ENCODE measurements at regions of chrX and their contacts with region 1.

Region 1: DNA sequence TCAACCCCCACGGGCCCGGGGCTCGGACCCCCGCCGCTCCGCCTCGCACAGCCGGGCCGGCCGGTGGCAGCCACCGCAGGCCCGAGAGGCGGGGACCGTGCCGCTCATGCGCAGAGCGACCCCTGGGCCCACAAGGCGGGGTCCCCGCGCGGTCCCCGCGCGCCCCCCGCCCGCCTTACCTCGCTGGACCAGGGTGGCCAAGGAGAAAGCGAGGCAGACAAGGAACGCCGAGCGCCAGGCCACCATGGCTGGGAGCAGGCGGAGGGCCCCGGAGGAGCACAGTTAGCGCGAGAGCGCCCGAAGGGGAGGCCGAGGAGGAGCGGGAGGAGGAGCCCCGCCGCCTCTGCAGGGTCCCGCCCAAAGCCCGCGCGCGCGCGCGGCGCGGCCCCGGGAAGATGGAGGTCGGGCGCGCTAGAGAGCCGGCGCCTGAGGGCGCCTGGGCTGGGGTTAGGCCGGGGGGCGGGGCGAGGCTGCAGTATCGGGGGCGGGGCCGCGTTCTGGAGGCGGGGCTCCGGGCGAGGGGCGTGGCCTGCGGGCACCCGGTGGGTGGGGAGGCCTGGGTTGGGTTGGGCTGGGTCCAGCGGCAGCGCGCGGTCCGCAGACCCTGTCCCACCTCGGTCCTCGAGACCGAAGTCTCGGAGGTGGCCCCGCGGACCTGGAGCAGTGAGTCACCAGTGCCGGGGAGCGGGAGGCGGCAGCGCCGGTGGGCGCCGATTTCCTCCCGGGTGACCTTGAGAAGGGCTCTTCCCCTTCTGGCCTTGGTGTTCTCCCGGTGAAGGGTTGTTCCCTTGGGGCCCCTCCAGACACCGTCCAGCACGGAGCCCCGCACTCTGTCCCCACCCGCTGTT is at the start of gene CD99L2:
- DNase-seq: peak; percentile 79 to 92 (median 85)
- ATAC-seq: peak; percentile 98
- H3K4me3 ChIP-seq: peak within 1 kb of the TSS; percentile 71
- H3K4me3 Mint-ChIP-seq: peak within 1 kb of the TSS; percentile 76 to 96 (median 90)
- H3K27ac ChIP-seq: peak within 1 kb of the TSS; percentile 89
- H3K27ac Mint-ChIP-seq: peak within 1 kb of the TSS in 8 of 9 donors; percentile 31 to 90 (median 76)
- H3K4me1 ChIP-seq: peaks cover 0 to 4% of the 10 kb centered on the region in 2 donors
- H3K4me1 Mint-ChIP-seq: peaks cover 0 to 16% (median 6%) of the 10 kb centered on the region in 7 donors
- H3K27me3 ChIP-seq: no peaks in the 10 kb centered on the region
- H3K27me3 Mint-ChIP-seq: peaks cover 0 to 26% (median 0%) of the 10 kb centered on the region in 5 donors
- total RNA-seq, gene CD99L2: 14.3 to 20.4 (median 15.6) TPM

Region 2: GRCh38 chrX:150547375-150548115 is 351.0 kb before region 1 on chrX:
- CTCF ChIA-PET with region 1: no interaction called
- POLR2A ChIA-PET with region 1: no interaction called
- intact Hi-C with region 1: loop called in 1 of 2 experiments (anchors 5 kb)
- DNase-seq: peak in 1 of 9 donors; percentile 25
- ATAC-seq: peak; percentile 53
- H3K4me3 ChIP-seq: peak overlapping the region; percentile 43
- H3K4me3 Mint-ChIP-seq: peak overlapping the region; percentile 74 to 91 (median 82)
- H3K27ac ChIP-seq: peak overlapping the region; percentile 14
- H3K27ac Mint-ChIP-seq: peak overlapping the region in 7 of 9 donors; percentile 52 to 96 (median 82)
- H3K4me1 ChIP-seq: peaks cover 11 to 13% of the 10 kb centered on the region in 2 donors
- H3K4me1 Mint-ChIP-seq: peaks cover 10 to 35% (median 24%) of the 10 kb centered on the region in 7 donors
- H3K27me3 ChIP-seq: no peaks in the 10 kb centered on the region
- H3K27me3 Mint-ChIP-seq: no peaks in the 10 kb centered on the region

Region 3: GRCh38 chrX:150693775-150694574 is 204.6 kb before region 1 on chrX:
- CTCF ChIA-PET with region 1: interaction called, 4 read pairs
- POLR2A ChIA-PET with region 1: interaction called, 3 read pairs
- intact Hi-C with region 1: loop called (anchors 2 to 5 kb)
- DNase-seq: peak; percentile 12 to 65 (median 51)
- ATAC-seq: peak; percentile 62
- H3K4me3 ChIP-seq: peak overlapping the region; percentile 61
- H3K4me3 Mint-ChIP-seq: peak overlapping the region; percentile 85 to 98 (median 94)
- H3K27ac ChIP-seq: peak overlapping the region; percentile 80
- H3K27ac Mint-ChIP-seq: peak overlapping the region; percentile 95 to 99 (median 97)
- H3K4me1 ChIP-seq: peaks cover 37 to 42% of the 10 kb centered on the region in 2 donors
- H3K4me1 Mint-ChIP-seq: peaks cover 25 to 68% (median 61%) of the 10 kb centered on the region in 7 donors
- H3K27me3 ChIP-seq: no peaks in the 10 kb centered on the region
- H3K27me3 Mint-ChIP-seq: no peaks in the 10 kb centered on the region

Region 4: DNA sequence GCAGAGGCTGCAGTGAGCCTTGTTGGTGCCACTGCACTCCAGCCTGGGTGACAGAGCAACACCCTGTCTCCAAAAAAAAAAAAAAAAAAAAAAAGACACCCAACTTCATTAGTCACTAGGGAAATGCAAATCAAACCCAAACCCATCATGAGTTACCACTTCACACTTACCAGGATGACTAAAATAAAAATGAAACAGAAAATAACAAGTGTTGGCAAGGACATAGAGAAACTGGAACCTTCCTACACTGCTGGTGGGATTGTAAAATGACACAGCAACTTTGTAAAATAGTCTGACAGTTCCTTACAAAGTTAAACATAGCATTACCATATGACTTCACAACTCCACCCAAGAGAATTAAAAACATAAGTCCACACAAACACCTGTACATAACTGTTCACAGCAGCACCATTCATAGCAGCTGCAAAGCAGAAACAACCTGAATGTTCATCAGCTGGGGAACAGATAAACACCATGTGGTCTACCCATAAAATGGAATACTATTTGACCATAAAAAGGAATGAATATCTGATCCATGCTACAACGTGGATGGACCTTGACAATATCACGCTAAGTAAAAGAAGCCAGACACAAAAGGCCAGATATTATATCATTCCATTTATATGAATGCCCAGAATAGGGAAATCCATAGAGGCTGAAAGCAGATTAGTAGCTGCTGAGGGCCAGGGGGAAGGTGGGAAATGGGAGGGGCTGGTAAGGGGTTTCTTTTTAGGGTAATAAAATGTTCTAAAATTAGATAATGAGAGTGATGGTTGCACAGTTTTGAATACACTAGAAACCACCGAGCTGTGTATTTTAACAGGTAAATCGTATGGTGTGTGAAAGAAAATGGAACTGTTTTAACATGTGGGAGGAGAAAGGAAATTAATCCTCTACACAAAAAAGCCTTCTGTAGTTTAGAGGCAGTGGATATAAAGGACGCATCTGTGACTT is 18.4 kb before region 1 on chrX:
- CTCF ChIA-PET with region 1: no interaction called
- POLR2A ChIA-PET with region 1: no interaction called
- intact Hi-C with region 1: loop called in 1 of 2 experiments (anchors 1 kb)
- DNase-seq: no peak
- ATAC-seq: peak; percentile 32
- H3K4me3 ChIP-seq: no peak overlapping the region
- H3K4me3 Mint-ChIP-seq: peak overlapping the region in 4 of 10 donors; percentile 26 to 47 (median 32)
- H3K27ac ChIP-seq: no peak overlapping the region
- H3K27ac Mint-ChIP-seq: peak overlapping the region in 7 of 9 donors; percentile 4 to 87 (median 53)
- H3K4me1 ChIP-seq: peaks cover 0 to 5% of the 10 kb centered on the region in 2 donors
- H3K4me1 Mint-ChIP-seq: peaks cover 11 to 45% (median 27%) of the 10 kb centered on the region in 7 donors
- H3K27me3 ChIP-seq: no peaks in the 10 kb centered on the region
- H3K27me3 Mint-ChIP-seq: no peaks in the 10 kb centered on the region

Region 5: DNA sequence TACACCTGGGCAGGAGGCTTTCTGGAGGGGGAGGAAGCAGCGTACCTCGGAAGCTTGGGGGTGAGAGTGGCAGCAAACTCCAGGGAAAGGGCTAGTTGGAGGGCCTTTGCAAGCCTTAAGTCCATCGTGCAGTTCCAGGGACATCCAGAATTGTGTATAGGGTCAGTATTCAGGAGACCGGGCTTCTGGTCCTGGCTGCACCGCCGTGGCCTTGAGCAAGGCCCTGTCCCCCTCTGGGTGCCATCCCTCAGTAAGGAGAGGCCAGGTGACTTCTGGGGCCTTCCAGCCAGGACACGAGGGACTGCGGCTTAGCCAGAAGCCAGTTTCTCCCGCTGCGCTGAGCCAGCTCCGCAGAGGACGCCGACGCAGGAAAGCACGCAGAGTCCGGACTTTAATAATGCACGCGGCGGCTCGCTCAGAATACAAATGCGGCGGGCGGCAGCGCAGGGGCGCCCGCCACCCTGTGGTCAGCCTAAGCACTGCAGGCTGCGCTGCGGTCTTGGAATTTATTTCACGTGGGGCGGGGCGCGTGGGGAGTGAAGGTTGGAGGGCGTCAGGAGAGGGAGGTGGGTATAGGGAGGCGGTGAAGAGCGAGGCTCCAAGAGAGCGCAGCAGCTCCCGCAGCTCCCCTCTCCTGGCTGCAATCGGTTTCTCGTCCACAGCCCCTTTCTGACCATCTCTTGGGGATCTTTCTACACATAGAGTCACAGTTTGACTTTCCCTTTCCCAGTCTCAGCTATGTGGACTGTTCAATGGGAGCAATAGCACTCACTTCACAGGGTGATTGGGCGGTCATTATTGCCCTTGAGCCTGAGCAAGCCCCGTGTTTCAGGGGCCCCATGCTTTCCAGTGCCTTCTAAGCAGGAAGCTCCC is 183.7 kb after region 1 on chrX:
- CTCF ChIA-PET with region 1: no interaction called
- POLR2A ChIA-PET with region 1: no interaction called
- intact Hi-C with region 1: loop called in 1 of 2 experiments (anchors 10 kb)
- DNase-seq: peak; percentile 19 to 62 (median 45)
- ATAC-seq: peak; percentile 91
- H3K4me3 ChIP-seq: no peak overlapping the region
- H3K4me3 Mint-ChIP-seq: peak overlapping the region in 7 of 10 donors; percentile 12 to 61 (median 49)
- H3K27ac ChIP-seq: no peak overlapping the region
- H3K27ac Mint-ChIP-seq: no peak overlapping the region
- H3K4me1 ChIP-seq: no peaks in the 10 kb centered on the region
- H3K4me1 Mint-ChIP-seq: peaks cover 0 to 7% (median 0%) of the 10 kb centered on the region in 7 donors
- H3K27me3 ChIP-seq: no peaks in the 10 kb centered on the region
- H3K27me3 Mint-ChIP-seq: peaks cover 5 to 25% (median 14%) of the 10 kb centered on the region in 5 donors

Region 6: GRCh38 chrX:151167791-151168345 is 269.3 kb after region 1 on chrX:
- CTCF ChIA-PET with region 1: no interaction called
- POLR2A ChIA-PET with region 1: no interaction called
- intact Hi-C with region 1: no loop called
- DNase-seq: no peak
- ATAC-seq: no peak
- H3K4me3 ChIP-seq: no peak overlapping the region
- H3K4me3 Mint-ChIP-seq: no peak overlapping the region
- H3K27ac ChIP-seq: no peak overlapping the region
- H3K27ac Mint-ChIP-seq: no peak overlapping the region
- H3K4me1 ChIP-seq: no peaks in the 10 kb centered on the region
- H3K4me1 Mint-ChIP-seq: no peaks in the 10 kb centered on the region
- H3K27me3 ChIP-seq: no peaks in the 10 kb centered on the region
- H3K27me3 Mint-ChIP-seq: peaks cover 6 to 22% (median 11%) of the 10 kb centered on the region in 5 donors

Measured in naive thymus-derived CD4-positive, alpha-beta T cell (primary cell).